PC-3 (cell line): ENCODE measurements at regions of chr3 and their contacts with region 1.

Region 1: DNA sequence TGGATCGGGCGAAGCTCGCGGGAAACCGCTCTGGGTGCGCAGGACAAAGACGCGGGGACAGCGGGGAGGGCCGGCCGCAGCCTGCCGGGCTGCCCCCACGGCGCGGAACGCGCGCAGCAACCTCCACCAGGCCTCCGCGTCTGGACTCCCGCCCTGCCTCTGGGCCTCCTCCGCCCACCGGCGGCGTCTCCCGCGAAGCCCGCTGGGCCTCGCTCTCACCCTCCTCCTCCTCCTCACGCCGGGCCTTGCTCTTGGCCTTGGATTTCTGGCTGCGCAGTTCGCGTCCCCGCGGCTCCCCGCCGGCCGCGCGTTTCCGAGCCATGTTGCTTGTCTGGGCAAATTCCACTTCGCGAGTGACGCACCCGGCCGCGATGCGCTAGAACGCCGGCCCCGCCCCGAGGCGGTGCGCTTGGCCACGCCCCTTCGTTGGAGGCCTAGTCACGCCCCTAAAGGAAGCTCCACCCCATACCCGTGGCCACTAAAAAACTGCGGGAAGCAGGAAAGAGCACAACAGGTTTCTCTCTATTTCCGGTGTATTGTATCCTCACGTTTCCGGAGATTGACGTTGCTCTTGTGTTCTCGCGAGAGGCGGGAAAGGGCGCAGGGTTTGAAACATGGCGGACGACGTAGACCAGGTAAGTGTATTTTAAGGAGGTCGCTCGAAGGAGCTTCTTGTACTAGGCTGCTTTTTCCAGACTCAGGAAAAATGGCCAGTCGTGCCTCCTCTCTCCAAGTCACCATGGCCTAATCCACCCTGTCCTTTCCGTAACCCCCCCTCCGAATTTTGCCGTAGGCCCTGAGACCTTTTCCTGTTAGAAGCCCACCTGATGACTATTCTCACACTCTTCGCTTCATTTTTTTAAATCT is at the starts of genes LSM3 and XPC:
- DNase-seq: peak; percentile 99
- ATAC-seq: peak; percentile 95
- H3K4me3 ChIP-seq: peak within 1 kb of the TSS; percentile 74
- H3K27ac ChIP-seq: peak within 1 kb of the TSS; percentile 39
- H3K4me1 ChIP-seq: peaks cover 31% of the 10 kb centered on the region
- H3K27me3 ChIP-seq: no peaks in the 10 kb centered on the region
- CTCF ChIP-seq: no peak
- total RNA-seq, gene LSM3: 22.0 and 27.2 TPM in 2 replicates
- total RNA-seq, gene XPC: 24.3 and 26.1 TPM in 2 replicates

Region 2: GRCh38 chr3:13932578-13933295 is 245.7 kb before region 1 on chr3:
- CTCF ChIA-PET with region 1: no interaction called
- POLR2A ChIA-PET with region 1: no interaction called
- intact Hi-C with region 1: no loop called
- DNase-seq: no peak
- ATAC-seq: no peak
- H3K4me3 ChIP-seq: no peak overlapping the region
- H3K27ac ChIP-seq: no peak overlapping the region
- H3K4me1 ChIP-seq: no peaks in the 10 kb centered on the region
- H3K27me3 ChIP-seq: 0 out of 2 replicates have a peak, but pooled peaks cover 5% of the 10 kb centered on the region
- CTCF ChIP-seq: no peak

Region 3: GRCh38 chr3:14157951-14158350 is 20.5 kb before region 1 on chr3:
- CTCF ChIA-PET with region 1: no interaction called
- POLR2A ChIA-PET with region 1: interaction called, 11 read pairs
- intact Hi-C with region 1: no loop called
- DNase-seq: no peak
- ATAC-seq: no peak
- H3K4me3 ChIP-seq: no peak overlapping the region
- H3K27ac ChIP-seq: no peak overlapping the region
- H3K4me1 ChIP-seq: no peaks in the 10 kb centered on the region
- H3K27me3 ChIP-seq: no peaks in the 10 kb centered on the region
- CTCF ChIP-seq: no peak